ENCODE measurements at regions of chr17 and their contacts with region 1.

Region 1: GRCh38 chr17:76868176-76868668 is at the start of gene MGAT5B:
- DNase-seq: peak; percentile 72
- H3K4me3 Mint-ChIP-seq: peak within 1 kb of the TSS; percentile 81
- H3K27ac Mint-ChIP-seq: peak within 1 kb of the TSS; percentile 72
- H3K4me1 Mint-ChIP-seq: peaks cover 12% of the 10 kb centered on the region
- H3K27me3 Mint-ChIP-seq: peaks cover 26% of the 10 kb centered on the region
- total RNA-seq, gene MGAT5B: 0.81 and 1.2 TPM in 2 replicates

Region 2: DNA sequence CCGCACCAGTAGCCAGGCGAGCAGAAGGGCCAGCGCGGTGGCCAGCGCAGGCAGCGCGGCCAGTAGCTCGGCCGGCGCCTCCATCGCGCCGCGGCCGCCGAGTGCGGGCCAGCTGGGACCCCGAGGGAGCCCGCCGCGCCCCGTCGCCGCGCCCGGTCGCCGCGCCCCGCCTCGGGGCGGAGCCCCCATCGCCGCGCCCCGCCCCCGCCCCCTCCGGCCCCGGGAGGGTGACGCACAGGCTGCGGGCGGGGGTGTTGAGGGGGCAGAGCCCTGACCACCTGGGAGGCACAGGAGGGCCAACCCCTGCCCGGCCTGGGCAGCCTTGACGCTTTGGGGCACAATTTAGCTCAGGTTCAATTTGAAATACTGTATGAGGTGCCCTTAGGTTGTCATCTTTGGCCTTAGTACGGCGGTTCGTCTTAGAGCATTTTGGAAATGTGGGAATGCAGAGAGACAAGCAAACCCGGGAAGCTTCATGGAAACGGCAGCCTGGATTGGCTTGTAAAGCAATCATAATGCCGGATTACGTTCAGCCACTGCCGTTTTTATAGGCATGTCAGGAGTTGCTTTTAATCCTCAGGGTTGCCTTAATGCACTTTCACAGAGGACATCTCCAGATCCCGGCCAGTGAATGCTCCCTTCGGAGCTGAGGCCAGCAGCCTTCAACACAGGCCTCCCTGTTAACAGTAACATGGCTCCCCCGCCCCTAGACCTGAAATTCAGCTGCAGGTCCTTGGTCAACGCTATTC is 157.2 kb before region 1 on chr17 and contains the start of gene MXRA7:
- intact Hi-C with region 1: no loop called
- DNase-seq: peak; percentile 44
- H3K4me3 Mint-ChIP-seq: peak within 1 kb of the TSS; percentile 77
- H3K27ac Mint-ChIP-seq: no peak within 1 kb of the TSS
- H3K4me1 Mint-ChIP-seq: peaks cover 27% of the 10 kb centered on the region
- H3K27me3 Mint-ChIP-seq: peaks cover 6% of the 10 kb centered on the region
- total RNA-seq, gene MXRA7: 3.8 and 5.1 TPM in 2 replicates

Region 3: DNA sequence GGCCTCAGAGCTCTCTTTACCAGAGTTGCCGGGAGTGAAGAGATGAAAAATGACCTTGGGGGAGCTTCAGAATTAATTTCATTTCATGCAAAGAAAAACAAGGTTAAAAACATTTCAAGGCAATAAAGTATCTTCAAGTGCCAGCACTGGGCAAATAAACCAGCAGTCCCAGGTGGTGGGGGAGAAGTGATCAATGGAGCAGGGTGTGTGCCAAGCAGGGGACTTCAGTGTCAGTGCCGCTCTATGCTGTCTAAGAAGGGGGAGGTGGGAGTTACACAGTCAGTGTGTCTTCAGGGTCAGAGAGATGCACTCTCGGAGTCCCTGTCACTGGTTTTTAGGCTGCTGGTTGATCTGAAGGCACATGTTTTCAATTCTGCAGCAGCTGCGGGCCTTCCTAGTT is 57.3 kb before region 1 on chr17:
- intact Hi-C with region 1: no loop called
- DNase-seq: no peak
- H3K4me3 Mint-ChIP-seq: no peak overlapping the region
- H3K27ac Mint-ChIP-seq: no peak overlapping the region
- H3K4me1 Mint-ChIP-seq: no peaks in the 10 kb centered on the region
- H3K27me3 Mint-ChIP-seq: peaks cover 4% of the 10 kb centered on the region

Region 4: DNA sequence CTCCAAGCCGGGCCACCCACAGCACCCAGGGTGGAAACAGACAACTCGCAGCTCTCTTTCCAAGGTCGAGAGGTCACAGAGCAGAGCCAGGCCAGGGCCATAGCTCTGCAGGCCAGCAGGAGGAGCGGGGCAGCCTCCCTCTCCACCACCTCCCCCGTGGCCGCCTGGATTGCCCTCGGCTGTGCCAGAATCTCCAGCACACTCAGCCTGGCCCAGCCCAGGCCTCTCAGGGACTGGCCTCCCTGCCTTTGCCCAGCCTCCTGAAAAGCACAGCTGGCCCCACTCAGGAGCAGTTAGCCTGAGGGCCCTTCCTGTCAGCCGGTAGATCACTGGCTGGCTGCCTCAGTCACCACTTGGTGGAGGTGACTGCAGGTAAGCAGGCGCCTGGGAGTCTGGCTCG is 186.7 kb after region 1 on chr17:
- intact Hi-C with region 1: loop called (anchors 1 kb)
- DNase-seq: no peak
- H3K4me3 Mint-ChIP-seq: no peak overlapping the region
- H3K27ac Mint-ChIP-seq: no peak overlapping the region
- H3K4me1 Mint-ChIP-seq: peaks cover 5% of the 10 kb centered on the region
- H3K27me3 Mint-ChIP-seq: peaks cover 6% of the 10 kb centered on the region

Region 5: GRCh38 chr17:77068915-77069314 is 200.7 kb after region 1 on chr17:
- intact Hi-C with region 1: loop called (anchors 1 kb)
- DNase-seq: no peak
- H3K4me3 Mint-ChIP-seq: no peak overlapping the region
- H3K27ac Mint-ChIP-seq: no peak overlapping the region
- H3K4me1 Mint-ChIP-seq: no peaks in the 10 kb centered on the region
- H3K27me3 Mint-ChIP-seq: peaks cover 35% of the 10 kb centered on the region

Region 6: DNA sequence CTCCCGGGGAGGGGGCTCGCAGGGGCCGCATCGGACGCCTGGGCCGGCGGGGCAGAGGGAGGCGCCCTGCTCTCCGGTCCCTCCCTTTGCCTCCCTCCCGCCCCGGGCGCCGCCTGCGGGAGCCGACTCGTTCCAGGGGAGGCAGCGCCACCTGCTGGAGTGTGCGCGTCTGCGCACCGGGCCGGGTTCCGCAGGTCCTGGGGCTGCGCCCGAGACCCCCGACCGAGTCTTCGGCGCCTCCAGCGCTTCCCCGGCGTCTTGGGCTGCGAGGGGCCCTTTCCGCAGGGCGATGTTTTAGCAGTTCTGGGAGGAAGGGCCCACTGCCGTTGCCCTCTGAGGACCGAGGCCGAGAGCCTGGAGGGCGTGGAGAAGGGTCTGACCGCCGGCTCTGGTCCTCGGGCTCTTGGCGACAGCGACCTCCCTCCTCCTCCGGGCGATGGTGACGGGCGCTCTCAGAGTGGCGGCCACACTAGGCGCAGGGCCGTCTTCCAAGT is 378.9 kb after region 1 on chr17:
- intact Hi-C with region 1: loop called (anchors 1 kb)
- DNase-seq: peak; percentile 81
- H3K4me3 Mint-ChIP-seq: peak overlapping the region; percentile 58
- H3K27ac Mint-ChIP-seq: no peak overlapping the region
- H3K4me1 Mint-ChIP-seq: peaks cover 24% of the 10 kb centered on the region
- H3K27me3 Mint-ChIP-seq: peaks cover 28% of the 10 kb centered on the region

Measured in activated T-helper 1 cell treated with anti-CD3 and anti-CD28 coated beads, Interleukin-12 subunit alpha, Interleukin-12 subunit beta, Interleukin-2, Interleukin-4 antibody, amounts not matched to agents 30 ng/mL and 10 ng/mL and 1 ng/mL, durations not matched to agents 14 hours and 24 hours and 36 hours (primary cell).